CD8-positive, alpha-beta T cell (primary cell): ENCODE measurements at regions of chr6 and their contacts with region 1.

Region 1: DNA sequence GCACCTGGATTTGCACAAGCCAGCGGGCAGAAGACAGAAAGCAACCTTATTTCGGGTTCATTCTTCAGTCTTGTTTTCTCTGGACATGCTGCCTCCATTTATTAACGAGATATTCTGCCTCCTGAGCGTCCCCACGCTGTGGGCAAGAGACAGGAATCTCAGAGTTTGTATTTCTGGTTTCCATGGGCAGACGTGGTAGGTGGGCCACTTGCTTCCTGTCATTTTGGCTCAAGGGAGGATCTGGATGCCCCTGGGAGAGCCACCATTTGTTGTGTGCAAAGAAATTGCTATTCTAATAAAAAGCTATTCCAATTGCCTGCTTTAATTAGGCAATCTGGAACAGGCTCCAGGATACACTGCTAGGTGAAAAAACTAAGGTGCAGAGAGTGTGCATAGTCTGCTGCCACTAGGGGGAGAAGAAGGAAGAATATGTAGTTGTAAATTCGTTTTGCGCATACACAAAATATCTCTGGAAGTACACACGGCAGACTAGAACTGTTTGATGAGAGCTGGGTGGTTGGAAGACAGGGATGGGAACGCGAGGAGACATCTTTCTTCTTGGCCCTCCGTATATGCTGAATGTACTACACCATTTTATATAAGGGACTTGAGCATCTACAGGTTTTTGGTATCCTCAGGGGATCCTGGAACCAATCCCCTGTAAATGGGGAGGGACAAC is 30.1 kb upstream of the SLC16A10 start:
- DNase-seq: peak in 2 of 9 experiments; percentile 49 to 64
- ATAC-seq: peak; percentile 65
- H3K4me3 ChIP-seq: no peak overlapping the region
- H3K4me3 Mint-ChIP-seq: no peak overlapping the region
- H3K27ac ChIP-seq: no peak overlapping the region
- H3K27ac Mint-ChIP-seq: no peak overlapping the region
- H3K4me1 ChIP-seq: no peaks in the 10 kb centered on the region
- H3K4me1 Mint-ChIP-seq: peaks cover 2% of the 10 kb centered on the region
- H3K27me3 ChIP-seq: no peaks in the 10 kb centered on the region
- H3K27me3 Mint-ChIP-seq: no peaks in the 10 kb centered on the region
- CTCF ChIP-seq: peak; percentile 61

Region 2: DNA sequence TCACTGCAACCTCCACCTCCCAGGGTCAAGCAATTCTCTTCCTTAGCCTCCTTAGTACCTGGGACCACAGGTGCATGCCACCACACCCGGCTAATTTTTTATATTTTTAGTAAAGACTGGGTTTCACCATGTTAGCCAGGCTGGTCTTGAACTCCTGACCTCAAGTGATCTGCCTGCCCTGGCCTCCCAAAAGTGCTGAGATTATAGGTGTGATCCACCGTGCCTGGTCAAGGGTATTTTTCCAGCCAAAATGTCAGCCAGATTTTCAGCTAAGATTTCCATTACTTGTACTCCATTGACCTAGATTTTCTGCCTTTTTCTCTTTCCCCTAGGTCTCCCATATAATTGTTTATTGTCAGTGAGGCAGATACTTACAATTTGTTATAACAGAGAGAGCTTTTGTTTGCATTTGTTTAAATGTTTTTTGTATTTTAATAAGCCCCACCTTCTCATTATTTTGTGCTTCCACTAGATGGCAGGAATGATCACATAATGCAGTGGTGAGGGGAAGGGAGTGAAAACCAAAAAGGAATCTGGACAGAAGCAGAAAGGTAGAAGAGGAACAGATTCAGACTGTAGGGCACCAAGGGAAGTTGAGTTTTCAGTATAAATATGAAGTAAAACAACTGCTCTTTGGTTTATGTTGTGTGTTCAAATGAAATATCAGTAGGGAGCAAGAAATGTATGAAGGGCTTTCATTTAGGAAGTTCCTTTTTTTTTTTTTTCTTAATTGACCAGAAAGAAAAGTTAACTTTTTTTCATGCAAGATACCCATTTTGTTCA is 45.7 kb before region 1 on chr6:
- CTCF ChIA-PET with region 1: interaction called, 11 read pairs
- POLR2A ChIA-PET with region 1: no interaction called
- intact Hi-C with region 1: no loop called
- DNase-seq: peak in 2 of 9 experiments; percentile 45 to 62
- ATAC-seq: peak; percentile 69
- H3K4me3 ChIP-seq: no peak overlapping the region
- H3K4me3 Mint-ChIP-seq: no peak overlapping the region
- H3K27ac ChIP-seq: no peak overlapping the region
- H3K27ac Mint-ChIP-seq: no peak overlapping the region
- H3K4me1 ChIP-seq: no peaks in the 10 kb centered on the region
- H3K4me1 Mint-ChIP-seq: peaks cover 4% of the 10 kb centered on the region
- H3K27me3 ChIP-seq: no peaks in the 10 kb centered on the region
- H3K27me3 Mint-ChIP-seq: no peaks in the 10 kb centered on the region
- CTCF ChIP-seq: peak; percentile 71

Region 3: DNA sequence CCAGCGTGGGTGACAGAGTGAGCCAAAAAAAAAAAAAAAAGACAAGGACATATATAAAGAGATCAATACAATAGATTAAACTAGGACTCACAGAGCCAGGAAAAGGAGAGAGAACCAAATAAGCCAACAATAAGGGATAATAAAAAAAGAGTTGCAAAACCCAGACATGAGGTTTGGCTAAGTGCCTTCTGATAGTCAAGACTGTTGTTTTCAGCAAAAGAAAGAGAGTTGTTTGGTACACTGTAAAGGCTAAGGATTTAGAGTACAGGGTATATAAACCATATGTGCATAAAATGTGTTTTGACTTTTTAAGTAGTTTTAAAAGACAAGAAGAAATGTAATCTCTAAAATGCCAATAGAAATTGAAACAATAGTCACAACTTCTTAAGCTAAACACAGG is 32.5 kb before region 1 on chr6:
- CTCF ChIA-PET with region 1: no interaction called
- POLR2A ChIA-PET with region 1: no interaction called
- intact Hi-C with region 1: no loop called
- DNase-seq: no peak
- ATAC-seq: no peak
- H3K4me3 ChIP-seq: no peak overlapping the region
- H3K4me3 Mint-ChIP-seq: no peak overlapping the region
- H3K27ac ChIP-seq: no peak overlapping the region
- H3K27ac Mint-ChIP-seq: no peak overlapping the region
- H3K4me1 ChIP-seq: no peaks in the 10 kb centered on the region
- H3K4me1 Mint-ChIP-seq: no peaks in the 10 kb centered on the region
- H3K27me3 ChIP-seq: no peaks in the 10 kb centered on the region
- H3K27me3 Mint-ChIP-seq: no peaks in the 10 kb centered on the region
- CTCF ChIP-seq: no peak

Region 4: DNA sequence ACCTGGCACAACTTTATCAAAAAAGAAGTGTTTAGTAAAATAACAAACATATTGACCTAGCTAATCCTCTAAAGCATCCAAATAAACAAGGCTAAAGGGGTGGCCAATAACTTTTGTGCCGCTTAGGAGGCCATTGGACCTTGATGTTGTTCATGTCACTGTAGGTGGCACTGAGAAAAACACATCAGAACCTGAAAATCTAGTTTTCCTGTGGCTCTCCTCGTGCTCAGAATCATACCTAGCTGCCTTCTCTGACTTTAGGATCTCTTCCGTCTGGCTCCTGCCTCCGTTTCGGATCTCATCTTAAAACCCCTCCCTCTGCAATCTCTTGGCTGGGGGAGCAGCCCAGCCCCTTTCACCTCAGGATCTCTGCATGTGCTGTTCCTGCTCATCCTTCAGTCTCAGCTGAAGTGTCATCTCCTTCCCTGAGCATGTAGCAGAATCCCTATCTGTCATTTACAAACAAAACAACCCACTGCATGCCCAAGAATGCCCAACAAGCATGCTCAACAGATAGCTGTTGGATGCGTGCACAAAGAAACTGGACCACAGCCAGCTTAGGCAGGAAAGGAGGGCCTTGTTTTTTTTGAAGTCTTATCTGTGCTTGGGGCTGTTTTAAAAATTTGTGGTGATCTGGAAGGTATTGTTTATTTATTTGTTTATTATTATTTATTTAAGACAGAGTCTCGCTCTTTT is 11.4 kb after region 1 on chr6:
- CTCF ChIA-PET with region 1: interaction called, 22 read pairs
- POLR2A ChIA-PET with region 1: interaction called, 4 read pairs
- intact Hi-C with region 1: no loop called
- DNase-seq: no peak
- ATAC-seq: no peak
- H3K4me3 ChIP-seq: no peak overlapping the region
- H3K4me3 Mint-ChIP-seq: no peak overlapping the region
- H3K27ac ChIP-seq: no peak overlapping the region
- H3K27ac Mint-ChIP-seq: no peak overlapping the region
- H3K4me1 ChIP-seq: no peaks in the 10 kb centered on the region
- H3K4me1 Mint-ChIP-seq: no peaks in the 10 kb centered on the region
- H3K27me3 ChIP-seq: no peaks in the 10 kb centered on the region
- H3K27me3 Mint-ChIP-seq: peaks cover 9% of the 10 kb centered on the region
- CTCF ChIP-seq: no peak

Region 5: DNA sequence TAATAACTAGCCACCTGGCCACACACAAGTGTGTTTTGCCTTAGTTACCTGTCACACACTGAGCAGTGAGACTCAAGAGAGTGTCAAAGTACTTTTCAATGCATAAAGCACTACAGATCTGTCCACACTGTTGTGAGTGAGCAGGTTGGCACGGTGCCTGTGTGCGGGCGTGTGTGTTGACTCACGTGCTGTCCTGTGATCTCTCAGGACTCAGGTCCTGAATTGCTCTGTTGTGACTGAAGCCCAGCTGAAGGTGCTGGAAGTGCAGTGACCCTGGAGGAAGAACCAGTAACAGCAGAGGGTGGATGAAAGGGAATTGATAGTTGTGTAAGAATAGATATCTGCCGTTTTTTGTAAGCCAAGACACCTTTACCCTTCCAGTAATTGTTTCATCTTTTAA is 48.4 kb after region 1 on chr6:
- CTCF ChIA-PET with region 1: no interaction called
- POLR2A ChIA-PET with region 1: no interaction called
- intact Hi-C with region 1: no loop called
- DNase-seq: peak in 4 of 9 experiments; percentile 9 to 29 (median 20)
- ATAC-seq: peak; percentile 26
- H3K4me3 ChIP-seq: no peak overlapping the region
- H3K4me3 Mint-ChIP-seq: no peak overlapping the region
- H3K27ac ChIP-seq: no peak overlapping the region
- H3K27ac Mint-ChIP-seq: peak overlapping the region; percentile 19
- H3K4me1 ChIP-seq: peaks cover 6% of the 10 kb centered on the region
- H3K4me1 Mint-ChIP-seq: peaks cover 26% of the 10 kb centered on the region
- H3K27me3 ChIP-seq: no peaks in the 10 kb centered on the region
- H3K27me3 Mint-ChIP-seq: no peaks in the 10 kb centered on the region
- CTCF ChIP-seq: no peak

Region 6: DNA sequence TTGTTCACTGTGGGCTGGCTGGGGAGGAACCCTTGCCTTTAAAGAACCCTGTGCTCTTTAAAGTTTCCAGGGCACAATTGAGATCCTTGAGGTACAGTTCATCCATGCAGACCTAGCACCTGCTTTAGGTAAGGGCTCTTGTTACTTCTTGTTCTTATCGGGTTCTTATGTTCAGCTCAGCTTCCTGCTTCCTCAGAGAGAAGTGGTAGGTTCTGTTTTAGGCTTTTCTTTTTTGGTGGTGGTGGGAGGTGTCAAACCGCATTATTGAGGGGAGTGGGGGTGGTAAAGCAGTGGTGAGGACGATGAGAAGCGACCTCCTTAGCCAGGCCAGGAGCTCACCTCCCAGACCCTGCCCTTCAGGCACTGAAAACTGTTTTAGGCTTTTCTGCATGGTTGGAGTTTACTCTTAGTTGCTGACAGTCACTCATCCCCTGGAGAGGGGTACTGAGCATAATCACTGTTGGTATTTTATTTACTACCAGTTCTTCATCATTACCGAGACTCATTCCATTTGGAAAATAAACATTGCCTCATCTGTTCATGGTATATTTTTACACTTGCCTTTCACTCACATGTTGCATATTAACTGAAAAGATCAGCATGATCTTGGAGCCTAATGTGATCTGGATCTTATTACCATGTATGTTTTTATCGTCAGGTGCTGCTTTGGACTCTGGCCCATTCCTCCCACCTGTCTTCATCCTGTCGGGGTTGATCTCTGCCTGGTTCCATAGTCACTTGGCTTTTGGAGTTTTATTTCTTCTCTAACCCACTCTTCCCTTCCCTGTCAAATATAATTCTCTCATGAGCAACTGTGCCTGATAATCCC is 65.5 kb after region 1 on chr6:
- CTCF ChIA-PET with region 1: interaction called, 12 read pairs
- POLR2A ChIA-PET with region 1: no interaction called
- intact Hi-C with region 1: no loop called
- DNase-seq: peak in 2 of 9 experiments; percentile 10 to 21
- ATAC-seq: peak; percentile 55
- H3K4me3 ChIP-seq: no peak overlapping the region
- H3K4me3 Mint-ChIP-seq: peak overlapping the region; percentile 46
- H3K27ac ChIP-seq: peak overlapping the region in 1 of 2 experiments; percentile 33
- H3K27ac Mint-ChIP-seq: peak overlapping the region; percentile 88
- H3K4me1 ChIP-seq: peaks cover 16% of the 10 kb centered on the region
- H3K4me1 Mint-ChIP-seq: peaks cover 33% of the 10 kb centered on the region
- H3K27me3 ChIP-seq: no peaks in the 10 kb centered on the region
- H3K27me3 Mint-ChIP-seq: no peaks in the 10 kb centered on the region
- CTCF ChIP-seq: no peak

Region 7: GRCh38 chr6:111259089-111259831 is 202.0 kb after region 1 on chr6:
- CTCF ChIA-PET with region 1: no interaction called
- POLR2A ChIA-PET with region 1: no interaction called
- intact Hi-C with region 1: no loop called
- DNase-seq: peak; percentile 98 to 100 (median 99)
- ATAC-seq: peak; percentile 96
- H3K4me3 ChIP-seq: peak overlapping the region; percentile 68 to 82
- H3K4me3 Mint-ChIP-seq: peak overlapping the region; percentile 86
- H3K27ac ChIP-seq: peak overlapping the region; percentile 90
- H3K27ac Mint-ChIP-seq: peak overlapping the region; percentile 90
- H3K4me1 ChIP-seq: peaks cover 18% of the 10 kb centered on the region
- H3K4me1 Mint-ChIP-seq: peaks cover 28% of the 10 kb centered on the region
- H3K27me3 ChIP-seq: no peaks in the 10 kb centered on the region
- H3K27me3 Mint-ChIP-seq: no peaks in the 10 kb centered on the region
- CTCF ChIP-seq: peak; percentile 80

Region 8: DNA sequence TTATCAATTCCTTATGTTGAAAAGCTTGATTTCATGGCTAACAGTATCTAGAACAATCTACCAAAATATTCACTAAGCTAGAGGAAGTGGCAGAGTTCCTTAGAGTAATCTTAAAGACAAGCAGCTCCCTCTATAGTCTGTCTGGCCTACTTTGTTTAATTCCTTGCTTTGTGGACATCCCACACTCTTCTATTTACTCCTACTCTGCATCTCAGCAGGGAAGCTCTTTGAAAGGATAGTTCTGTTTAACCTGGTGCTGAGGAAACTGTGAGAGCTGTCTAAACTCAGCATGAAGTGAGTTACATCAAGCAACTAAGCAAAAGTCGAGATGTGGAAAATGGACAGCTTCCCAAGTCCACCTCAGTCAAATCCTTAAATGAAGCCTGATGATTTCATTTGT is 421.5 kb after region 1 on chr6:
- CTCF ChIA-PET with region 1: no interaction called
- POLR2A ChIA-PET with region 1: no interaction called
- intact Hi-C with region 1: loop called in 1 of 2 experiments (anchors 2 kb)
- DNase-seq: peak in 2 of 9 experiments; percentile 54 to 70
- ATAC-seq: no peak
- H3K4me3 ChIP-seq: no peak overlapping the region
- H3K4me3 Mint-ChIP-seq: no peak overlapping the region
- H3K27ac ChIP-seq: no peak overlapping the region
- H3K27ac Mint-ChIP-seq: peak overlapping the region; percentile 47
- H3K4me1 ChIP-seq: peaks cover 14% of the 10 kb centered on the region
- H3K4me1 Mint-ChIP-seq: peaks cover 44% of the 10 kb centered on the region
- H3K27me3 ChIP-seq: no peaks in the 10 kb centered on the region
- H3K27me3 Mint-ChIP-seq: no peaks in the 10 kb centered on the region
- CTCF ChIP-seq: peak; percentile 49